Ovary (tissue), 10 donors: ENCODE measurements at regions of chr9 and their contacts with region 1.

Region 1: DNA sequence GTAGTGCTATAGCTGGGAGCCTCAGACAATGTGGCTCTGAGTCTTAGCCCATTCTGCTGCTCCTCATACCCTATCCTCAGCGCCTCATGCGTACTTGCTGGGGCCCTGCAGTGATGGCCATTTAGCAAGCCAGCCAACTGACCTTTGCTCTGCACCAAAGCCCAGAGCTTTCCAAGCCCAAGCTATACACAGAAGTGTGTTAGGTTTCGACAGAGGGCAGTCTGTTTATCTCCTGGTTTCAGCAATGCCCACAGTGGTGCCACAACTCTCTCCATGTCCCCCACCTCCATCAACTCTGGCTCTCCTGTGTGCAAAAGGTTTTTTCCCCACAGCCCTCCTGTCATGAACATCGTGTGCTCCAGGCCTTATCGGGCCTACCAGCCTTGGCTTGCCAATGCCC is 16.9 kb downstream of the GNG10 start:
- DNase-seq: no peak
- H3K4me3 ChIP-seq: no peak overlapping the region
- H3K27ac ChIP-seq: no peak overlapping the region
- H3K4me1 ChIP-seq: no peaks in the 10 kb centered on the region
- H3K27me3 ChIP-seq: no peaks in the 10 kb centered on the region
- CTCF ChIP-seq: no peak
- EP300 ChIP-seq: no peak
- POLR2A ChIP-seq: no peak

Region 2: DNA sequence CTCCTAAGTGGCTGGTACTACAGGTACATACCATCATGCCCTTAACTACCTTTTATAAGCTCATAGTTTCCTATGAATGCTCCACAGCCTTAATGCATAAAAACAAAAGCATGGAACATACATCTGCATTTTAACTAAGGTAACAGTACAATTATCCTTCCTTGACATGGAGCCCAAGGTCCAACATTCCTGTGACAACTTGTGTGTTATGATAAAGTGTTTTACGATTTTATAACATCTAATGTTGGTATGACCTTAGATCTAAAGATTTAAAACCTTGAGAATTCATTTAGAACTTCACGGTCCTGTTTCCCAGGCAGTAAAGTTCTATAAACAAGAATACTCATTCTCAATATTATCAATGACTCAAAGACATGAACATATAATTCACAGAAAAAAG is 26.2 kb after region 1 on chr9:
- intact Hi-C with region 1: loop called in 1 of 4 experiments (anchors 1 kb)
- DNase-seq: no peak
- H3K4me3 ChIP-seq: no peak overlapping the region
- H3K27ac ChIP-seq: no peak overlapping the region
- H3K4me1 ChIP-seq: no peaks in the 10 kb centered on the region
- H3K27me3 ChIP-seq: no peaks in the 10 kb centered on the region
- CTCF ChIP-seq: no peak
- EP300 ChIP-seq: no peak
- POLR2A ChIP-seq: no peak